Ascending aorta (tissue), 2 donors: ENCODE measurements at regions of chr6 and their contacts with region 1.

Region 1: GRCh38 chr6:52284460-52285176 is at the start of gene MCM3:
- DNase-seq: peak; percentile 96 to 99
- H3K4me3 ChIP-seq: peak within 1 kb of the TSS; percentile 75 to 100
- H3K27ac ChIP-seq: peak within 1 kb of the TSS; percentile 71 to 72
- H3K4me1 ChIP-seq: peaks cover 10 to 11% of the 10 kb centered on the region in 2 donors
- H3K27me3 ChIP-seq: no peaks in the 10 kb centered on the region
- CTCF ChIP-seq: no peak
- total RNA-seq, gene MCM3: 44.6 TPM

Region 2: GRCh38 chr6:52306972-52307870 is 22.6 kb after region 1 on chr6:
- intact Hi-C with region 1: no loop called
- DNase-seq: no peak
- H3K4me3 ChIP-seq: no peak overlapping the region
- H3K27ac ChIP-seq: no peak overlapping the region
- H3K4me1 ChIP-seq: peaks cover 0 to 5% of the 10 kb centered on the region in 2 donors
- H3K27me3 ChIP-seq: no peaks in the 10 kb centered on the region
- CTCF ChIP-seq: no peak

Region 3: DNA sequence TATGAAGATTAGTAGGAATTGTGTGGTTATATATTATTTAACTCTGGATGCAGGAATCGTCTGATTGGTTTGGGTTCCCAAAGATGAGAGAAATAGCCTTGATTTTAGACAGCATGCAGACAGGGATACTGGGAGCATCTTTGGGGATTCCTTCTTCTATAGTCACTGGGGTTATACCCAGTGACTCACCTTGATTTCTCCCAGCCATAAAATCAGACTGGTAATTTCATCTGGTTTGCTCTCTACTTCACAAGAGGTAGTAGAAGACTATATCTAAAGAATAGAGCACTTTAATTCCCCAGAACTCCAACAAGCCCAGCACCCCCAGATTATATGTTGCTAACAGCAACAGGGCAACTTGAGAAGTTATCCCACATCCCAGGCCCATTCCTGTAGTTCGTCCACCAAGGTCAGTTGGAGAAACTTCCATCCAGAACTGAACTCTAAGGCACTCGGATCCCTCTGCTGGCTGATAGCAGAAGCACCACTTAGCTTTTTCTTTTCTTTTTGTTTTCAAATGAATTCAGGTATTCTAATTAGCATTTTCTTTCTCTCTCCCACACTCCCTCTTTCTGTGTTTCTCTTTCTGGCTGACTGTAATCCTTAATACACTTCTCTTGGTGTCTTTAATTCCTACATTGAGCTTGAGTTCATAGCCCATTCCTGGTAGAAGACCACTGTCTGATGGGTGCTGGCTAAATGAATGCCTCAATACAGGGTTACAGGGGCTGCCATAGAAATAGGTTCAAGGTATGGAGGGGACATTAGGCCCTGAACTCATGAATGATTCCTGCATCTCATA is 115.1 kb after region 1 on chr6:
- intact Hi-C with region 1: loop called (anchors 2 kb)
- DNase-seq: no peak
- H3K4me3 ChIP-seq: no peak overlapping the region
- H3K27ac ChIP-seq: no peak overlapping the region
- H3K4me1 ChIP-seq: no peaks in the 10 kb centered on the region
- H3K27me3 ChIP-seq: no peaks in the 10 kb centered on the region
- CTCF ChIP-seq: peak; percentile 58 to 79 (median 75)